ENCODE measurements at regions of chrX and their contacts with region 1.

Region 1: GRCh38 chrX:8679550-8679949 is 52.4 kb downstream of the ANOS1 start:
- DNase-seq: no peak

Region 2: DNA sequence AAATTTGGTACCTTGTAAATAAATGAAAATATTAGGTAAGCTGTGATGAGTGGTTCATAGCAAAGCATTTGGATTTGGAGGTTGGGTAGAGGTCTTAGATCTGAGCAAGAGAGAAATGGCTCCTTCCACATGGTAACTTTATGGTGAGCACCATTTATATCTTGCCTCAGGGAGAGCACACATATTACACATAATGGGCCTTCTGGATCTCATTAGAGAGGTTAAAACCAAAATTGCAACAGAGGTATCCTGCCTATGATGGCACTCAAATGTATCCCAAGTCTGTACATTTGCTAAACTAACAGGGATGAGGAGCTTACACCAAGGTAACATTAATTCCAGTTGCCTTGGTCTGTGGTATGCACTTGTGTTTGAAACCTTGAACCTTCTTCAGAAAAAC is 1444.5 kb before region 1 on chrX:
- intact Hi-C with region 1: loop called in 1 of 2 experiments (anchors 5 kb)
- DNase-seq: no peak

Region 3: GRCh38 chrX:8704184-8704583 is 24.6 kb after region 1 on chrX:
- intact Hi-C with region 1: no loop called
- DNase-seq: no peak